AG04450 (cell line): ENCODE measurements at regions of chr4 and their contacts with region 1.

Region 1: DNA sequence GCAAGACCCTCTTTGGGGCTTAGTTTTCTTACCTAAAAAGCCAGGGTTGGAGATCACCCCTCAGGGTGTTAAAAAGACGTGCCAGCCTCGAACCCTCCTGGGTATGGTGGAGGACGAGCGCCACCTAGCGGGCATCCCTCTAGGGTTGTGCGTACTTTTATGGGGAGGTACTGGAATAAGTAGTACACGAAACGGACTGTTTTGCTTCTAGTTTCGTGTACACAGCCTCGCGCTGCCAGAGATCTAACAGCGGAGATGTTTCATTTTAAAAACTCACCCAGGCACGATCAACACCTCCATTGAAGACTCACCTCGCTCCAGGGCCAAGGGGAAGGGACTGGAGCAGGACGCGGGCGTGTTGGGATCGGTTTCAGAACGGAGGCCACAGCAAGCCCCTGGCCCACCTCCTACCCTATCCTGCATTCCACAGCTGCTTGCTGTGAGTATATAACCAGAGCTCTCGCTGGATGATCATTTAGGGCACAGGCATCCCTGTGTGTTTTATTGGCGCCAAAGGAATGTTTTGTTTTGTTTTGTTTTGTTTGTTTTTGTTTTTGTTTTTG is 4.8 kb upstream of the NKX3-2 start:
- DNase-seq: peak; percentile 57
- H3K4me3 ChIP-seq: peak overlapping the region; percentile 62
- H3K27ac ChIP-seq: no peak overlapping the region
- H3K27me3 ChIP-seq: peaks cover 46% of the 10 kb centered on the region
- CTCF ChIP-seq: peak; percentile 95

Region 2: DNA sequence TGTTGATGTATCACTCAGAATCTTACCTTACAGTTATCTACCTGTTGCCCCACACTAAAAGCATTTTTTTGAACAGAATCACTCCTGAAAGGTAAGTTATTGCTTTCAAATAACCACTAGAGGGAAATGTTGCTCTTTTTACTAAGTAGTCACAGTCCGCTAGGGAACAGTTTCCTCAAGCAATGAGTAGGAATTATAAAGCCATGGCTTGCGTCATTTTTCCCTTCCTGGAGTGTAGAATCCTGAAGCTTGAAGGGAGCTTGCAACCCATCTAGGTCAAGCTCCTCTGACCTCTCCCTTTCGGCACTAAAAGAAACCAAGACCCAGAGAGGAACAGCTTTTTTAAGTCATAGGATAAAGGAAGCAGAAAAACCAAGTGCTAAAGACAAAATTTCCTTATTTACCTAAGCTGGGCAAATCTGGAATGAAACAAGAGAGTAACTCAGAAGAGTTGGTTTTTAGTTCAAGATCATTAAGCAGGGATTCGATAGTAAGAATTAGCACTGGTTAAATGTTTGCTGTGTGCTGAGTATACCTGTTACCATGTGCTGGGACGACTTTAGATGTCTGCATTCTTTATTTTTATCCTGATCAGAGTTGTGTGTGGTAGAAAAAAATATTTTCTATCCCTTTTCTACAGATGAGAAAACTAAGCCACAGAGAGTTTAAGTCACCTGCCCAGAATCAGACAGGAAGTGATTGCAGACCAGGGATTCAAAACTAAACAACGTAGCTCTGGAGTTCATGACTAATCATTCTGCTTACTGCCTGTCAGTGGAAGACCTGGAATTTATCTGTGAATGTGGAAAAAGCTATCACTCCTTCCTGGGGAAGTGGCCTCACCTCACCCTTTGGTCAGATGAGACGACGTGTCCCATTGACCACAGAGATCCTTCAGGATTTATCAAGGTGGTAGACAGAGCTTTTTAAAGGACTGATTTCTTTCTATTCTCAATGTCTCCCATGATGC is 696.4 kb before region 1 on chr4:
- CTCF ChIA-PET with region 1: interaction called, 28 read pairs
- POLR2A ChIA-PET with region 1: no interaction called
- DNase-seq: peak; percentile 13
- H3K4me3 ChIP-seq: no peak overlapping the region
- H3K27ac ChIP-seq: no peak overlapping the region
- H3K27me3 ChIP-seq: no peaks in the 10 kb centered on the region
- CTCF ChIP-seq: peak; percentile 59